CD4-positive, alpha-beta memory T cell (primary cell): ENCODE measurements at regions of chr13 and their contacts with region 1.

Region 1: DNA sequence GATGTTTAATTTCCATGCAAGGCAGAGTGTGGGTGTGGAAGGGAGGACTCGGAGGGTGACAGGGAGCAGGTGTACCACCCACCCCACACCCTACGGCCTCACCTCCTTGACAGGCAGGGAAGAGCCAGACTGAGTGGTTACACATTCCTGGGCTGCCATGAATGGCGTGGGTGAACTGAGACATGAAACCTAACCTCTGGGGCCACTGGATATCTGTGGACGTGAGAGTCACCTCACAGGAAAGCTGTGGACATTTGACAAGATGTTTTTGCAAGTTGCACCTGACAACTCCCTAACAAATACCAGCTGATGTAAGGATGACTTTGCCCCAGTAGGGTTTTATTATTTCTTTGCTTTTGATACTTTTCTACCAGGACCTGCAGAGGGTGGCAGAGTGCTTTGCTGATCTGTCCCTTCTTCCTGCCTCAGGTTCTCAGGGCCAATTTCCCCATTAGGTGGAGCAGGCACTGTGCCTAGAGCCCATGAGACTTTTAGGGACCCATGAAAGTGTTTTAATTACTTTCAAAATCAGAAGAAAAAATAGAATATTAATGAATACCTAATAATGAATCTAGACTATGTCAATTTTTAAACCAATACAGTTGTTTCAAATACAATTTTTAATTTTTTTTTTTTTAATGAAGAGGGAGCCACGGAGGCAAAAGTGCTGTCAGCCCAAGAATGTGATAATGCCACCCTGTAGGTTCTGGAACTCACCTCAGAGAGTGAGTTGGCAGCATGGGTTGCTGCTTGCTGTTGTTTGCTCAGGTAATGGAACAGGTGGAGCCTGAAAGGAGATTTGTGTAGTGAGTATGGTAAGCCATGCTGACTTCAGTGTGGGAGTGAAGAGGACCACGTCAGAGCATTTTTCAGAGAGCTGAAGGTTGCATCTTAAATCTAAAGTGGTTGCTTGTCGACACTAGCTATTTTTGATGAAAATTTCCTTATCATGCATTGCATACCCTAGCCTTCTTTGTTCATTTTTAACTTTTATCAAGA is 58.0 kb upstream of the CYSLTR2 start:
- DNase-seq: peak; percentile 51 to 71 (median 65)
- H3K4me3 ChIP-seq: no peak overlapping the region
- H3K4me3 Mint-ChIP-seq: no peak overlapping the region
- H3K27ac ChIP-seq: no peak overlapping the region
- H3K27ac Mint-ChIP-seq: peak overlapping the region in 1 of 7 donors; percentile 37
- H3K4me1 ChIP-seq: no peaks in the 10 kb centered on the region
- H3K4me1 Mint-ChIP-seq: peaks cover 0 to under 1% (median 0%) of the 10 kb centered on the region in 4 donors
- H3K27me3 ChIP-seq: no peaks in the 10 kb centered on the region
- H3K27me3 Mint-ChIP-seq: no peaks in the 10 kb centered on the region

Region 2: GRCh38 chr13:48653472-48653939 is 57.8 kb after region 1 on chr13 and contains the start of gene CYSLTR2:
- CTCF ChIA-PET with region 1: interaction called, 3 read pairs
- POLR2A ChIA-PET with region 1: no interaction called
- intact Hi-C with region 1: loop called (anchors 10 kb)
- DNase-seq: peak; percentile 69 to 89 (median 86)
- H3K4me3 ChIP-seq: peak within 1 kb of the TSS; percentile 30 to 55
- H3K4me3 Mint-ChIP-seq: peak within 1 kb of the TSS; percentile 81 to 90 (median 89)
- H3K27ac ChIP-seq: peak within 1 kb of the TSS; percentile 69
- H3K27ac Mint-ChIP-seq: peak within 1 kb of the TSS; percentile 88 to 98 (median 95)
- H3K4me1 ChIP-seq: peaks cover 51% of the 10 kb centered on the region
- H3K4me1 Mint-ChIP-seq: peaks cover 27 to 53% (median 43%) of the 10 kb centered on the region in 4 donors
- H3K27me3 ChIP-seq: no peaks in the 10 kb centered on the region
- H3K27me3 Mint-ChIP-seq: no peaks in the 10 kb centered on the region
- total RNA-seq, gene CYSLTR2: 3.3 to 3.7 TPM

Region 3: GRCh38 chr13:48731957-48732569 is 136.3 kb after region 1 on chr13:
- CTCF ChIA-PET with region 1: interaction called, 31 read pairs
- POLR2A ChIA-PET with region 1: no interaction called
- intact Hi-C with region 1: loop called (anchors 1 kb)
- DNase-seq: peak in 4 of 5 donors; percentile 38 to 54 (median 50)
- H3K4me3 ChIP-seq: no peak overlapping the region
- H3K4me3 Mint-ChIP-seq: peak overlapping the region; percentile 60 to 89 (median 84)
- H3K27ac ChIP-seq: no peak overlapping the region
- H3K27ac Mint-ChIP-seq: peak overlapping the region in 3 of 7 donors; percentile 53 to 75 (median 60)
- H3K4me1 ChIP-seq: no peaks in the 10 kb centered on the region
- H3K4me1 Mint-ChIP-seq: peaks cover 10 to 17% (median 15%) of the 10 kb centered on the region in 4 donors
- H3K27me3 ChIP-seq: no peaks in the 10 kb centered on the region
- H3K27me3 Mint-ChIP-seq: peaks cover 0 to 3% of the 10 kb centered on the region in 2 donors